Motor neuron (in vitro differentiated cells): ENCODE measurements at regions of chr2 and their contacts with region 1.

Region 1: GRCh38 chr2:70616168-70616694 is 62.6 kb upstream of the TGFA start:
- ATAC-seq: no peak
- H3K4me3 ChIP-seq: no peak overlapping the region
- H3K27ac ChIP-seq: no peak overlapping the region
- H3K4me1 ChIP-seq: peaks cover 0 to 2% of the 10 kb centered on the region in 2 donors

Region 2: GRCh38 chr2:70553584-70554337 is 62.5 kb before region 1 on chr2 and contains the start of gene TGFA:
- in situ Hi-C with region 1: loop called in 1 of 9 experiments (anchors 10 kb)
- ATAC-seq: peak; percentile 79 to 89 (median 86)
- H3K4me3 ChIP-seq: peak within 1 kb of the TSS; percentile 47 to 80 (median 71)
- H3K27ac ChIP-seq: no peak within 1 kb of the TSS
- H3K4me1 ChIP-seq: peaks cover 7 to 10% of the 10 kb centered on the region in 2 donors
- total RNA-seq, gene TGFA: 0.09 to 2.5 (median 0.45) TPM